MCF 10A (cell line): ENCODE measurements at regions of chr12 and their contacts with region 1.

Region 1: GRCh38 chr12:121132601-121133481 is at the start of gene P2RX7:
- DNase-seq: peak; percentile 89
- H3K4me3 Mint-ChIP-seq: peak within 1 kb of the TSS; percentile 63
- H3K27ac Mint-ChIP-seq: peak within 1 kb of the TSS; percentile 70
- H3K4me1 Mint-ChIP-seq: peaks cover 31% of the 10 kb centered on the region
- H3K27me3 Mint-ChIP-seq: peaks cover 15% of the 10 kb centered on the region
- CTCF ChIP-seq: peak; percentile 12
- total RNA-seq, gene P2RX7: 0.68 and 1.3 TPM in 2 replicates

Region 2: DNA sequence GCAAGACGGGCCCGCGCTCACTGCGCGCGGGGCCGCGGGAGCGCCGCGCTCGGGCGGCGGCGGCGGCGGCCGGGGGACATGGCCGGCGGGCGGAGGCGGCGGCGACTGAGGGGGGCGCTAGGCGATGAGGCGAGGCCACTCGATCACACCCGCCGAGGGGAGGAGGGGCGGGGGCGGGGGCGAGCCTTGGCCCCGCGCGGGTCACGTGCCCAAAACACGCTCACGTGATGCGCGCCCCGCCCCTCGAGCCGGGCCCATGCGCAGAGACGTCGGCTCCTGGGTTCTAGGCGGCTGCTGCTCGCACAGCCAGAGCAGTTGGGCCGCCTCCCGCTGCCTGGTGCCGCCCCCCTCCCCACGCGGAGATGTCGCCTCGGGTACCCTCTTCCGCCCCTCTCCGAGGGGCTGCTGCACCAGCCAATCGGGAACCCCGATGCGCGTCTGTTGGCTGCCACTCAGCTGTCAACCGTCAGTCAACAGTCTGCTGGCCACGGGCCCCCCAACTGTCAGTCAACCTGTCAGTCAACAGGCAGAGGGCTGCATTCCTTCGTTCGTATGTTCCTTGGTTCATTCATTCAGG is 228.6 kb before region 1 on chr12 and contains the start of gene SPPL3:
- CTCF ChIA-PET with region 1: no interaction called
- POLR2A ChIA-PET with region 1: no interaction called
- intact Hi-C with region 1: no loop called
- DNase-seq: peak; percentile 86
- H3K4me3 Mint-ChIP-seq: peak within 1 kb of the TSS; percentile 100
- H3K27ac Mint-ChIP-seq: peak within 1 kb of the TSS; percentile 94
- H3K4me1 Mint-ChIP-seq: peaks cover 39% of the 10 kb centered on the region
- H3K27me3 Mint-ChIP-seq: no peaks in the 10 kb centered on the region
- CTCF ChIP-seq: no peak
- total RNA-seq, gene SPPL3: 32.6 and 43.7 TPM in 2 replicates

Region 3: GRCh38 chr12:121102307-121102706 is 30.5 kb before region 1 on chr12:
- CTCF ChIA-PET with region 1: no interaction called
- POLR2A ChIA-PET with region 1: no interaction called
- intact Hi-C with region 1: no loop called
- DNase-seq: no peak
- H3K4me3 Mint-ChIP-seq: no peak overlapping the region
- H3K27ac Mint-ChIP-seq: no peak overlapping the region
- H3K4me1 Mint-ChIP-seq: no peaks in the 10 kb centered on the region
- H3K27me3 Mint-ChIP-seq: no peaks in the 10 kb centered on the region
- CTCF ChIP-seq: no peak

Region 4: DNA sequence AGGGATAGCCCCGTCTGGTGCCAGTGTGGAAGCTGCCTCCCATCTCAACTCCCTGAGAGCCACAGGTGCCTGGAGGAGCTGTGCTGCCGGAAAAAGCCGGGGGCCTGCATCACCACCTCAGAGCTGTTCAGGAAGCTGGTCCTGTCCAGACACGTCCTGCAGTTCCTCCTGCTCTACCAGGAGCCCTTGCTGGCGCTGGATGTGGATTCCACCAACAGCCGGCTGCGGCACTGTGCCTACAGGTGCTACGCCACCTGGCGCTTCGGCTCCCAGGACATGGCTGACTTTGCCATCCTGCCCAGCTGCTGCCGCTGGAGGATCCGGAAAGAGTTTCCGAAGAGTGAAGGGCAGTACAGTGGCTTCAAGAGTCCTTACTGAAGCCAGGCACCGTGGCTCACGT is 51.6 kb after region 1 on chr12:
- CTCF ChIA-PET with region 1: interaction called, 3 read pairs
- POLR2A ChIA-PET with region 1: interaction called, 4 read pairs
- intact Hi-C with region 1: loop called (anchors 2 kb)
- DNase-seq: peak; percentile 91
- H3K4me3 Mint-ChIP-seq: no peak overlapping the region
- H3K27ac Mint-ChIP-seq: peak overlapping the region; percentile 27
- H3K4me1 Mint-ChIP-seq: no peaks in the 10 kb centered on the region
- H3K27me3 Mint-ChIP-seq: no peaks in the 10 kb centered on the region
- CTCF ChIP-seq: no peak